ENCODE measurements at regions of chr1 and their contacts with region 1.

Region 1: GRCh38 chr1:177937931-177938330 is 31.9 kb downstream of the SEC16B start:
- DNase-seq: no peak
- ATAC-seq: no peak

Region 2: DNA sequence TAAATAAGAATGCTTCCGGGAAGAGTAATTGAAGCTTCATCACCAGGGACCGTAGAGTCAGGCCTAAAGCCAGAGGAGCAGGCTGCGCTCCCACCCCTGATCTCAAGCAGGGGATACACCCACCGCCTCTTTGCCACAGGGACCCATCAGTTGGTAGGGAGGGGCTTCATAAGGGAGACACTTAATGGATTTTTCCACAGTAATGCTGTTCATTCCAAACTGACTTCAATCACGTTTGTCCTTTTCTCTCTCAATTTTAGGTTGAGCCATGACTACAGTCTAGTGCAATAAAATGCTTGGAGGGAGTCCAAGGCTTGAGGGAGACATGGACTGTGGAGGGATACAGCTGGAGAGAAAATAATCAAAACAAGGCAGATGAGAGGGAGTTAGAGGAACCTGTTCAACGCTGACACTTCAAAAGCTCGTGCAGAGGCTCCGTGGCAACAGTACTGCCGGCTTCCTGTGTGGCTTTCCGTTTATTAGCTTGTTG is 79.6 kb before region 1 on chr1:
- intact Hi-C with region 1: loop called (anchors 10 kb)
- DNase-seq: no peak
- ATAC-seq: no peak